Motor neuron (in vitro differentiated cells): ENCODE measurements at regions of chr3 and their contacts with region 1.

Region 1: GRCh38 chr3:13884851-13885703 is 5.2 kb upstream of the WNT7A start:
- ATAC-seq: peak in 2 of 8 experiments; percentile 9 to 47
- H3K4me3 ChIP-seq: no peak overlapping the region
- H3K27ac ChIP-seq: no peak overlapping the region
- H3K4me1 ChIP-seq: no peaks in the 10 kb centered on the region

Region 2: DNA sequence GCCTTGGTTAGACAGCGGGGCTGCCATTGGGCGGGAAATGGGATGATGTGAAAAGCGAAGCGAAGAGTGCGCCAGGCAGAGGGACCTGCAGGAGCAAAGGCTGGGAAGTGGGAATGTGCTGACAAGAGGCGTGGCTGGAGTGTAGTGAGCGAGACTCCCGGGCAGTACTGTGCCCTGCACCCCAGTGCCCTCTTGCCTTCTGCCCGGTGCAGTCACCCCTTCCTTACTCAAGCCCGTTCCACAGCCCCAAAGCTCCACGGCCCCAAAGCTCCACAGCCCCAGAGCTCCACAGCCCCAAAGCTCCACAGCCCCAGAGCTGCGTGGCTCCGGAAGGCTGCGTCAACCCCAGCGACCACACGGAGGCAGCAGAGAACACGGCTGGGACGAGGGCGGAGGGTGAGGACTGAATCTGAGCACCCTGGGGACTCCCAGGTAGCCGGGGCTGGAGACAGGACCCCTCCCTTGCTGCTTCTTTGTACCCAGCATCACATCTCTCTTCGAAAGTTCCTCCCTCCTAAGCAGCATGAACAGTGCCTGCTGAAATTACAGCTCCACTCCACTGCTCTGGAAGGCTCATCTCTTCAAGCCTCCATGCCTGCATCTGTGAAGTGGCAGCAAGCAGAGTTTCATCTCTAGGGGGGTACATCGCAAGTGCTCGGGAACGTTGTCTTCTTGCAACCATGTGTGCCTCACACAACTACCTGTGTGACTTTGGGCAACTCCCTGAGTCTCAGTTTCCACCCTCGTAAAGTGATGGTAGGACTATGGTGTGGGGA is 227.2 kb before region 1 on chr3:
- in situ Hi-C with region 1: loop called (anchors 5 to 25 kb)
- ATAC-seq: peak; percentile 75 to 83 (median 80)
- H3K4me3 ChIP-seq: peak overlapping the region in 2 of 5 donors; percentile 1 to 10
- H3K27ac ChIP-seq: no peak overlapping the region
- H3K4me1 ChIP-seq: peaks cover 20 to 37% of the 10 kb centered on the region in 2 donors

Region 3: DNA sequence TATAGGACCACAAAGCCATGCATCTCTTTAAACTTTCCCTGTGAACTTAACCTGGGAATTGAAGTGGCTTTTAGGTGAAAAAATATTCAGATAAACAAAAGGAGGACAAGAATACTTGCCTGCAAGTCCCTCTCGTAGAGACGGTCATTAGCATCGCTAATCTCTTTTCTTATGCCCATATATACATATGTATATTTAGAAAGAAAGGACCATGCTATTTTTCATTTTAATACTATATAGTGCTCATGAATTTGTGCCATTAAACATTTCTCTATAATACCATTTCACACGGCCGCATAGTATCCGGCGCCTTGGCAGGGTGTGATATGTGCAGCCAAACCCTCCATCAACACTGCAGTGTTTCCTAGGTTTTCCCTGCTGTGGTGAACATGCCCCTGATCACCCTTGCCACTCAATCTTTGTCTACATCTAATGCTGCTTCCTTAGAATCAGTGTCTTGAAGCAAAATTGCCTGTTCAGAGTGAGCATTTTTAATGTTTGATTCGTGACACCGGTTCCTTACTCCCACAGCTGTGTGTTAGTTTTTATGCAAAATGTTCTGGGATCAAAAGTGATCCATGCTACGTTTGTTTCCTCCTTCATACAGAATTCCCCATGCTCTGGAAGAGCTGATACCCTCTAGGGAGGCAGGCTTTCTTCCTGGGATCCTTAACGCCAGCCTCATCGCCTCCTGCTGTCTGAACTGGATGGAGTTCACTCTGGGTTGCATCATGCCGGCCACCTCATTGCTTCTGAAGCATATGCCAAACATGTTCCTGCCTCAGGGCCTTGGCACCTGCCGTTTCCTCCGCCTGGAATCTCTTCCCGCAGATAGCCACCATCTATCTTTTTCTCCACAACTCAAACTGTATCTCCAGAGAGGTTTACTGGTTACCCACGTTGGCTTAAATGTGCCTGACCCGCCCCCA is 218.0 kb before region 1 on chr3:
- in situ Hi-C with region 1: loop called in 4 of 9 experiments (anchors 10 to 25 kb)
- ATAC-seq: peak in 6 of 8 experiments; percentile 27 to 87 (median 48)
- H3K4me3 ChIP-seq: no peak overlapping the region
- H3K27ac ChIP-seq: peak overlapping the region in 1 of 2 donors; percentile 62
- H3K4me1 ChIP-seq: peaks cover 4 to 19% of the 10 kb centered on the region in 2 donors

Region 4: DNA sequence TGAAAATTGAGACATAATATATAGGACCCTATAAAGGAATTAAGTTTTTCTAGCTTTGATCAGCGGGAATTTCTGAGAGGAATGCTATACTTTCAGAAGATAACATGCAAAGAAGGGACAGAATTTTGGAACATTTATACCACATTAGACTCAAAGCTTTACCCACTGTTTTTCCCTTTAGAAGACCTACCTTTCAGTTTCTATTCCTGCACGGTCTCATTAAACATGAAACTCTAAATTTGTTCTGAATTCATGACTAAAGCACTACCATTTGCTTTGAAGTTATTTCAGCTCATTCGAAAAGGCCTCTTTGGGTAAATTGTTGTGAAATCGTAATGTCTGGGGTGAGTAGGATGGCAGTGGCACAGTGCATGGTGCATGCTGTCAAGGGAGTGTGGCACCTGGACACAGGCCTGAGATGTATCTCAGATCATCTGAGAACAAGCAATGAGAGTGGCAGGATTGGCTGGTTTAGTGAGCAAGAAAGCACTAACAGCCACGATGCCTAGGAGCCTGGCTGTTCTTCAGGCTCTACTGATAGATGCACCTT is 197.1 kb after region 1 on chr3:
- in situ Hi-C with region 1: no loop called
- ATAC-seq: no peak
- H3K4me3 ChIP-seq: no peak overlapping the region
- H3K27ac ChIP-seq: no peak overlapping the region
- H3K4me1 ChIP-seq: no peaks in the 10 kb centered on the region